Caco-2 (cell line): ENCODE measurements at regions of chr9 and their contacts with region 1.

Region 1: GRCh38 chr9:130461218-130461630 is 16.5 kb downstream of the ASS1 start:
- DNase-seq: peak in 1 of 2 experiments; percentile 77
- H3K4me3 ChIP-seq: no peak overlapping the region
- H3K4me3 Mint-ChIP-seq: no peak overlapping the region
- H3K27ac Mint-ChIP-seq: no peak overlapping the region
- H3K4me1 ChIP-seq: no peaks in the 10 kb centered on the region
- H3K4me1 Mint-ChIP-seq: no peaks in the 10 kb centered on the region
- H3K27me3 ChIP-seq: no peaks in the 10 kb centered on the region
- H3K27me3 Mint-ChIP-seq: peaks cover 3% of the 10 kb centered on the region
- CTCF ChIP-seq: peak; percentile 91 to 94

Region 2: GRCh38 chr9:130334915-130335314 is 126.3 kb before region 1 on chr9:
- CTCF ChIA-PET with region 1: interaction called, 10 read pairs
- POLR2A ChIA-PET with region 1: no interaction called
- intact Hi-C with region 1: no loop called
- DNase-seq: no peak
- H3K4me3 ChIP-seq: no peak overlapping the region
- H3K4me3 Mint-ChIP-seq: no peak overlapping the region
- H3K27ac Mint-ChIP-seq: no peak overlapping the region
- H3K4me1 ChIP-seq: no peaks in the 10 kb centered on the region
- H3K4me1 Mint-ChIP-seq: no peaks in the 10 kb centered on the region
- H3K27me3 ChIP-seq: no peaks in the 10 kb centered on the region
- H3K27me3 Mint-ChIP-seq: peaks cover 2% of the 10 kb centered on the region
- CTCF ChIP-seq: no peak

Region 3: DNA sequence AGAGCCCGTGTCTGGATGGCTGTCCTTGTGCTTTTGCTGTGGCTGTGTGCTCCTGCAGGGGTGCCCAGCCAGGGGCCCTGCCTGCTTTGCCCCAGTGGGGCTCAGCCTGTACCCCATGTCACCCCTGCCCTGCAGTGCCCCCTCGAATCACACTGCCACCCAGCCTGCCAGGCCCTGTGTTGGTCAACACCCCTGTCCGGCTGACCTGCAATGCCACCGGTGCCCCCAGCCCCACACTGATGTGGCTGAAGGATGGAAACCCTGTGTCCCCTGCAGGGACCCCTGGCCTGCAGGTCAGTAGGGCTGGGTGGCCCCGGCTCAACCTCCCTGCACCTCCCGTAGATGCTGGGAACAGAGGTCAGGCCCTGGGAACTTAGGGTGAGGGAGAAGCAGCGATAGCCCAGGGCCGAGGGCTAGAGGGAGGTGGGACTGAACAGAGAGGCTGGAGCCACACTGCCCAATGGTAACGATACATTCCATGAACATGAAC is 99.3 kb before region 1 on chr9:
- CTCF ChIA-PET with region 1: no interaction called
- POLR2A ChIA-PET with region 1: no interaction called
- intact Hi-C with region 1: no loop called
- DNase-seq: no peak
- H3K4me3 ChIP-seq: no peak overlapping the region
- H3K4me3 Mint-ChIP-seq: no peak overlapping the region
- H3K27ac Mint-ChIP-seq: no peak overlapping the region
- H3K4me1 ChIP-seq: no peaks in the 10 kb centered on the region
- H3K4me1 Mint-ChIP-seq: no peaks in the 10 kb centered on the region
- H3K27me3 ChIP-seq: no peaks in the 10 kb centered on the region
- H3K27me3 Mint-ChIP-seq: peaks cover 3% of the 10 kb centered on the region
- CTCF ChIP-seq: no peak

Region 4: GRCh38 chr9:130396581-130396980 is 64.6 kb before region 1 on chr9:
- CTCF ChIA-PET with region 1: no interaction called
- POLR2A ChIA-PET with region 1: no interaction called
- intact Hi-C with region 1: no loop called
- DNase-seq: no peak
- H3K4me3 ChIP-seq: no peak overlapping the region
- H3K4me3 Mint-ChIP-seq: no peak overlapping the region
- H3K27ac Mint-ChIP-seq: no peak overlapping the region
- H3K4me1 ChIP-seq: no peaks in the 10 kb centered on the region
- H3K4me1 Mint-ChIP-seq: no peaks in the 10 kb centered on the region
- H3K27me3 ChIP-seq: no peaks in the 10 kb centered on the region
- H3K27me3 Mint-ChIP-seq: no peaks in the 10 kb centered on the region
- CTCF ChIP-seq: no peak

Region 5: DNA sequence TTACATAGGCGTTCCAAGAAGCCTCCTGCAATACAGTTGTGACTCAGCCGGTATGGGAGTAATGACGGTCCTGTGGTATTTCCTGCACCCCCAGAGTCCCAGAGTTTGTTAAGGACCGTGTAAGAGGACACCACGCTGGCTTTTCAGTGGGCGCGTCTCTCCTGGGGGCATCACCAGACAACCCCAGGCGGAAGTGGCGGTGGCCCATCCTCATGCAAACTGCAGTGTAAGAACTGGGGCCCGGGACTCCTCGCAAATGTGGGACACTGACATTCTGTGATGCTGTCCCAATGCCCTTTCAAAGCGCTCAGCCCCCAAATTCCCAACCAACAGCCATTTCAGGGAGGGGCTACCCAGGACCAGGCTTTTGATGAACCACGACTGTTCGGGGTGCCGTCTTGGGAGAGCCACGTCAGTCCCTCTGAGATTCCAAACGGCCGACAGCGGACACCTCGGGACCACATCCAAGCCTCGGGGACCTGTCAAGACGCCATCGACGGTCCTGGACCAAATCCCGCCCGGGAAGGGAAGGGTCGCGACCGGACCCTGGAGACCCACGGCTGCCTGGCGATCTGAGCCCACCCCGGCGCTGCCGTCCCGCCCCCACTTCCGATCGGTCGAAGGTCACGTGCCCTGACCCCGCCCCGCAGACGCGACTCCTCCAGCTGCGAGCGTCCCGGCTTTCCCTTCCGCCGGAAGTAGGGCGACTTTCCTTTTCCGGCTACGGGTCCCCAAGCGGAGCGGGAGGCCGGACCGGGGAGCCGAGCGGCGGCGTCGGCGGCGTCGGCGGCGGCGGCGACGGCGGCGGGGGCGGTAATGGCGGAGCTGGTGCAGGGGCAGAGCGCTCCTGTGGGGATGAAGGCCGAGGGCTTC is 117.9 kb after region 1 on chr9 and contains the start of gene FUBP3:
- CTCF ChIA-PET with region 1: no interaction called
- POLR2A ChIA-PET with region 1: no interaction called
- intact Hi-C with region 1: loop called (anchors 10 kb)
- DNase-seq: peak; percentile 92 to 93
- H3K4me3 ChIP-seq: peak within 1 kb of the TSS; percentile 97
- H3K4me3 Mint-ChIP-seq: peak within 1 kb of the TSS; percentile 85
- H3K27ac Mint-ChIP-seq: peak within 1 kb of the TSS; percentile 85
- H3K4me1 ChIP-seq: 0 out of 2 replicates have a peak, but pooled peaks cover 5% of the 10 kb centered on the region
- H3K4me1 Mint-ChIP-seq: peaks cover 15% of the 10 kb centered on the region
- H3K27me3 ChIP-seq: no peaks in the 10 kb centered on the region
- H3K27me3 Mint-ChIP-seq: no peaks in the 10 kb centered on the region
- CTCF ChIP-seq: no peak
- total RNA-seq, gene FUBP3: 76.1 and 78.6 TPM in 2 replicates

Region 6: GRCh38 chr9:130626249-130626992 is 165.2 kb after region 1 on chr9:
- CTCF ChIA-PET with region 1: no interaction called
- POLR2A ChIA-PET with region 1: no interaction called
- intact Hi-C with region 1: loop called (anchors 10 kb)
- DNase-seq: peak in 1 of 2 experiments; percentile 22
- H3K4me3 ChIP-seq: no peak overlapping the region
- H3K4me3 Mint-ChIP-seq: no peak overlapping the region
- H3K27ac Mint-ChIP-seq: no peak overlapping the region
- H3K4me1 ChIP-seq: no peaks in the 10 kb centered on the region
- H3K4me1 Mint-ChIP-seq: no peaks in the 10 kb centered on the region
- H3K27me3 ChIP-seq: no peaks in the 10 kb centered on the region
- H3K27me3 Mint-ChIP-seq: no peaks in the 10 kb centered on the region
- CTCF ChIP-seq: no peak